Aorta (tissue), 5 donors: ENCODE measurements at regions of chr9 and their contacts with region 1.

Region 1: DNA sequence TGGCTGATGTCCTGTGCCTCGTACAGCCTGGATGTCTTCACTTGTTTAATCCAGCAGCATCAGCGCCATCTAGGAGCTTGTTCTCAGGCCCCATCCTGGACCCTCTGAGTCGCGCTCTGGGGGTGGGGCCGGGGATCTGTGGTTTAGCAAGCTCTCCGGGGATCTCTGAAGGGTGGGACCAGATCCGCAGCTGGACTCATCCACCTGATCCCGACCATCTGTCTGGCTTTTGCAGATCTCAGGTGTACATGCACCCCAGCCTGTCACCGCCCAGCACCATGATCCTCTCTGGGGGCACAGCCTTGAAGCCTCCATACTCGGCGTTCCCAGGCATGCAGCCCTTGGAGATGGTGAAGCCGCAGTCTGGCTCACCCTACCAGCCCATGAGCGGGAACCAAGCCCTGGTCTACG is 15.1 kb upstream of the POMT1 start:
- DNase-seq: peak in 1 of 2 donors; percentile 50
- ATAC-seq: no peak
- H3K4me3 ChIP-seq: no peak overlapping the region
- H3K27ac ChIP-seq: no peak overlapping the region
- H3K4me1 ChIP-seq: no peaks in the 10 kb centered on the region
- H3K27me3 ChIP-seq: no peaks in the 10 kb centered on the region

Region 2: GRCh38 chr9:130973169-130973936 is 514.3 kb before region 1 on chr9:
- intact Hi-C with region 1: no loop called
- DNase-seq: no peak
- ATAC-seq: no peak
- H3K4me3 ChIP-seq: no peak overlapping the region
- H3K27ac ChIP-seq: no peak overlapping the region
- H3K4me1 ChIP-seq: no peaks in the 10 kb centered on the region
- H3K27me3 ChIP-seq: no peaks in the 10 kb centered on the region

Region 3: GRCh38 chr9:131441441-131441840 is 46.2 kb before region 1 on chr9:
- intact Hi-C with region 1: loop called in 1 of 2 experiments (anchors 5 kb)
- DNase-seq: no peak
- ATAC-seq: no peak
- H3K4me3 ChIP-seq: no peak overlapping the region
- H3K27ac ChIP-seq: no peak overlapping the region
- H3K4me1 ChIP-seq: no peaks in the 10 kb centered on the region
- H3K27me3 ChIP-seq: no peaks in the 10 kb centered on the region

Region 4: DNA sequence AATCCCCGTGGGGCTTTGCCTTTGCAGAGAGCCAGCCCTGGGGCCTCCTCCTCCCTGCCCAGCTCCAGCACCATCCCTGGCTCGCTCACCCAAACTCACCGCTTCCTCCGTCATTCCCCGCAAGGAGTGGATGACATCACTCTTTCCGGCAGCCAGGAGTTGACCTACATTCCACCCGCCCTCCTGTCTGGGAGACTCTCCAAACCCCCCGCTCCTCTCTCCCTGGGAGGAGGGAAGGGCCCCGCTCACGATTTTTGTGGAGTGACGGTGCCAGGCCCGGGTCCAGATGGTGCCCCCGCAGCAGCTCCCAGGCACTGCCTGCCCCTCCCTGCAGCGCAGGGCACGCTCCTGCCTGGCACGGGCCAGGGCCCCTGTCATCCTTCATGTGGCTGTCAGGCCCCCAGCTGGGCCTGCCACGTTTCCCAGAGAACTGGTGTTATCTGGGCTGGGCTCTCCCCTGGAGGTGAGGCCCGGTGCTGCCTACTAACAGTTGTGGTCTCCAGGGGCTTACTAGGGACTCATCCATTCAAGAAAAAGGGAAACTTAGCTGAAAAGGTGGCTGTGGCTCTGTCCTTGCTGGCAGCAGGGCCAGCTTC is 726.5 kb after region 1 on chr9:
- intact Hi-C with region 1: no loop called
- DNase-seq: peak; percentile 84 to 91
- ATAC-seq: peak; percentile 82
- H3K4me3 ChIP-seq: no peak overlapping the region
- H3K27ac ChIP-seq: no peak overlapping the region
- H3K4me1 ChIP-seq: no peaks in the 10 kb centered on the region
- H3K27me3 ChIP-seq: no peaks in the 10 kb centered on the region